PC-9 (cell line): ENCODE measurements at regions of chr6 and their contacts with region 1.

Region 1: DNA sequence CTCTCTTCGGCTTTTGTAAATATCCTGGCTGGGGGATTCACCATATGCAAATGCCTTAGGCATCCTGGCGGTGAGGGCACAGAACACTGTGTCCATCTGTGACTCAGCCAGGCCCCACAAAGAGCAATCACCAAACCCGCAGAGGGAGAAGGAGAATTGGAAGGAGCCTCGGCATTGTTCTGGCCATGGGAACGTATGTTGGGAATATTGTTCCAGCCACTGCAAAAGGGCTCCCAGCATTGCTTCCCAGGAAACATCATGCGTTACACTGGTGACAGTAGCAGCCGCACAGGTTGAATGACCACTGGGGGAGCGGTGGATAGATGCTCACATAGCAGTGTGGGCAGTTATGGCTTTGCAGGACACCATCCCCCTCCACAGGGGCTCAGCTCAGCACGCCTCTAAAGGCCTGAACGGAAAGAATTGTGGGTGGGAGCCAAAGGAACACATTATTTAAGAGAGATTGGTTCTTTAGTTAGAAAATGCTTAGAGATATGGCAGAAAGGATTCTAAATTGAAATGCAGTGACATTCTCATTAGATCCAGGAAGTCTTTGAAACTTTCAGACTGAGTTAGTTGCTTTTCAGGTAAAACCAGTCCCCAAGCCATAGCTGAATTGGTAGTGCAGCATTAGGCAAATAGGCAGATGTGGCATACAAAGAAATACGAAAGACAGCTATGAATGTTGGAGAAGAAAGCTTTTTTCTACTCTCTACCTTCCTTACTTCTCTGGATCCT is 104.3 kb downstream of the RNF144B start:
- DNase-seq: peak; percentile 33 to 76
- H3K4me3 ChIP-seq: no peak overlapping the region
- H3K27ac ChIP-seq: no peak overlapping the region
- H3K4me1 ChIP-seq: peaks cover 42% of the 10 kb centered on the region
- H3K27me3 ChIP-seq: no peaks in the 10 kb centered on the region
- CTCF ChIP-seq: no peak

Region 2: DNA sequence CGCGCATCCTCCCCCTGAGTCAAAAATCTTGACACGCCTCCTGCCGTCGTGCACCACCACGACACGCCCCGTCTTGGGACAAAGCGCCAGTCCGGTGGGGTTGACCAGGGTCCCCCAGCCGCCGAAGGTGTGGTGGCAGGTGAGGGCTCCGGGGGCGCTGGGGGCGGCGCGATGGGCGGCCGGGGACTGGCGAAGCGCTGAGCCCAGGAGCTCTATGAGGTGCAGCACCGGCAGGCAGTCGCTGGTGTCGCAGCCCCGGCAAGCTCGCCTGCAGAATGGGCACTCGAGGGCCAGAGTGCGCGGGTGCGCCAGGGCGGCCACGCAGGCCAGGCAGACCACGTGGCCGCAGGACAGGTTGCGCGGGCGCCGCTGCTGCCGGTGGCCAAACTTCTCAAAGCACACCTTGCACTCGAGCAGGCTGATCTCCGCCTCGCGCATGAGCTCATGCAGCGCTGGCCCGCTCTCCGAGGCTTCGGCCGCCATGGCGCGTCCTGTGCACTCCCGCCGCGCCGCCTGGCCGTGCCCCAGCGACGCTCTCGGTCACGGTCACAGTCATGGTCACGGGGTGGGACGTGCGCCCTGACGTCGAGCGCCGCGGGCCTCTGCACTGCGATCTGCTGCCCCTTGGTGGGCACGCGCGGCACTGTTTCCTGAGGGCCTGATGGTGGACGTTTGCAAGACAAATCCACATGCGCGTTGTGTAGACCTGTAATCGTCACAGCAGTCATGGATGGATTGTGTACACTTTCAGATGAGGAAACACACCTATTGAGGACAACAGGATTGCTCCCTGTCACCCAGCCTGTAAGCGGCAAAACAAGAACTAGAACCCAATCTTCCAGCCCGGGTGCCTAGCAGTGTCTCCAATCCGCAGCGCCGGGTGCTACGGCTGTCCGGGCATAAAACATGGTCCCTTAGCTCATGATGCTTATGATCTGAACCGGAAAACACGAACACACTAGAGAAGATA is 369.1 kb before region 1 on chr6 and contains the start of gene NHLRC1:
- CTCF ChIA-PET with region 1: no interaction called
- POLR2A ChIA-PET with region 1: no interaction called
- intact Hi-C with region 1: no loop called
- DNase-seq: peak; percentile 42 to 88
- H3K4me3 ChIP-seq: peak within 1 kb of the TSS; percentile 19; the same call in 1 of the 2 replicates
- H3K27ac ChIP-seq: no peak within 1 kb of the TSS
- H3K4me1 ChIP-seq: no peaks in the 10 kb centered on the region
- H3K27me3 ChIP-seq: no peaks in the 10 kb centered on the region
- CTCF ChIP-seq: peak; percentile 76
- total RNA-seq, gene NHLRC1: 0.90 and 1.0 TPM in 2 replicates

Region 3: GRCh38 chr6:18432180-18432579 is 59.3 kb before region 1 on chr6:
- CTCF ChIA-PET with region 1: no interaction called
- POLR2A ChIA-PET with region 1: interaction called, 9 read pairs
- intact Hi-C with region 1: loop called (anchors 2 kb)
- DNase-seq: peak in 1 of 2 experiments; percentile 51
- H3K4me3 ChIP-seq: no peak overlapping the region
- H3K27ac ChIP-seq: peak overlapping the region; percentile 89
- H3K4me1 ChIP-seq: peaks cover 50% of the 10 kb centered on the region
- H3K27me3 ChIP-seq: no peaks in the 10 kb centered on the region
- CTCF ChIP-seq: no peak

Region 4: GRCh38 chr6:18447552-18447951 is 43.9 kb before region 1 on chr6:
- CTCF ChIA-PET with region 1: no interaction called
- POLR2A ChIA-PET with region 1: no interaction called
- intact Hi-C with region 1: loop called (anchors 5 kb)
- DNase-seq: no peak
- H3K4me3 ChIP-seq: no peak overlapping the region
- H3K27ac ChIP-seq: no peak overlapping the region
- H3K4me1 ChIP-seq: no peaks in the 10 kb centered on the region
- H3K27me3 ChIP-seq: no peaks in the 10 kb centered on the region
- CTCF ChIP-seq: no peak